ENCODE measurements at regions of chr2 and their contacts with region 1.

Region 1: DNA sequence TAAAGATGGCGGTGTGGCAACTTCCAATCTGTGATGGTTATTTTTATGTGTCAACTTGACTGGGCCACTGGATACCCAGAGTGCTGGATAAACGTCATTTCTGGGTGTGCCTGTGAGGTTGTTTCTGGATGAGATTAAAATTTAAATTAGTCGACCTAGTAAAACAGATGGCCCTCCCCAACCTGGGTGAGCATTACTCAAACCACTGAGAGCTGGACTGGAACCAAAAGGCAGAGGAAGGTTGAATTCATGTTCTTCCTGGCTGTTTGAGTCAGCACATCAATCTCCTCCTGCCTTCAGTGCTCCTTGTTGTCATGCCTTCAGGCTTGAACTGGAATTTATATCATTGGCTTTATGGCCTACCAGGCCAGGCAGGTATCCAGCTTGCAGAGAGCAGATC is 190.8 kb upstream of the RGPD4 start:
- DNase-seq: no peak
- ATAC-seq: no peak
- H3K4me3 ChIP-seq: no peak overlapping the region
- H3K4me3 Mint-ChIP-seq: no peak overlapping the region
- H3K27ac ChIP-seq: no peak overlapping the region
- H3K27ac Mint-ChIP-seq: no peak overlapping the region
- H3K4me1 ChIP-seq: no peaks in the 10 kb centered on the region
- H3K4me1 Mint-ChIP-seq: no peaks in the 10 kb centered on the region
- H3K27me3 ChIP-seq: no peaks in the 10 kb centered on the region
- H3K27me3 Mint-ChIP-seq: no peaks in the 10 kb centered on the region
- CTCF ChIP-seq: no peak

Region 2: GRCh38 chr2:107648781-107649404 is 13.0 kb after region 1 on chr2:
- CTCF ChIA-PET with region 1: no interaction called
- POLR2A ChIA-PET with region 1: no interaction called
- intact Hi-C with region 1: loop called in 1 of 2 experiments (anchors 1 kb)
- DNase-seq: no peak
- ATAC-seq: no peak
- H3K4me3 ChIP-seq: no peak overlapping the region
- H3K4me3 Mint-ChIP-seq: no peak overlapping the region
- H3K27ac ChIP-seq: no peak overlapping the region
- H3K27ac Mint-ChIP-seq: no peak overlapping the region
- H3K4me1 ChIP-seq: no peaks in the 10 kb centered on the region
- H3K4me1 Mint-ChIP-seq: no peaks in the 10 kb centered on the region
- H3K27me3 ChIP-seq: no peaks in the 10 kb centered on the region
- H3K27me3 Mint-ChIP-seq: no peaks in the 10 kb centered on the region
- CTCF ChIP-seq: no peak

Measured in CD8-positive, alpha-beta T cell (primary cell).